Heart left ventricle (tissue), 16 donors: ENCODE measurements at regions of chr7 and their contacts with region 1.

Region 1: DNA sequence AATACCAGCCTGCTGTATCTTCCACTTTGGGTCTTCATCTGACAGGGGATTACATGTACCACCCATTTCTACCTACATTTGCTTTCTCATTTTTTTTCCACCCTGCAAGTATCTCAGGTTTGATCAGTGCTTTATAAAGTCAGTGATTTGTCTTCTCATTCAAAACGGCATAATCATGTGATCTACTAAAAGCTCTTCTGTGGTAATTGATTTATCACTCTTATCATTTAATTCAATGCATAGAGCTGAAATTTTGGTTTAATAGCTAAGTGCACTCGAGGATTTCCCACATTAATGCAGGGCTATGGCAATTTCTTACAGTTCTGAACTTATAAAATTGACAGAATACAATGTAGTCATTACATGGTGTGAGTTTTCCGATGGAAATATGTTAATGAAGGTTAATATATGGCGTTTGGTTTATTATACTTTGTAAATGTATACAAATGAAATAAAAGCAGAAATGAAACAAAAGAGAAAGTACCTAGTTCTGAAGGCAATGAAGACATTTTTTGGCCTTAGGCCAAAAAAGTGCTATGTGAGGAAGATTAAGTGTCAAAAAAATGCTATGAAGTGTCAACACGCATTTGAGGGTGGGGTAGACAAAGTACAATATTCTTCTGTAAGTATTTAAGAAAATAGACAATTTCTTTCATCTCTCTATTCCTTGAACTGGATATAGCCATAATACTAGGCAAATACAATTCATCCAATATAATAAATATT is 457.3 kb downstream of the ETV1 start:
- DNase-seq: no peak
- ATAC-seq: no peak
- H3K4me3 ChIP-seq: no peak overlapping the region
- H3K27ac ChIP-seq: no peak overlapping the region
- H3K4me1 ChIP-seq: no peaks in the 10 kb centered on the region
- H3K27me3 ChIP-seq: no peaks in the 10 kb centered on the region
- CTCF ChIP-seq: no peak
- POLR2A ChIP-seq: no peak

Region 2: GRCh38 chr7:13615679-13616078 is 83.5 kb after region 1 on chr7:
- intact Hi-C with region 1: no loop called
- DNase-seq: no peak
- ATAC-seq: no peak
- H3K4me3 ChIP-seq: no peak overlapping the region
- H3K27ac ChIP-seq: no peak overlapping the region
- H3K4me1 ChIP-seq: no peaks in the 10 kb centered on the region
- H3K27me3 ChIP-seq: no peaks in the 10 kb centered on the region
- CTCF ChIP-seq: no peak
- POLR2A ChIP-seq: no peak

Region 3: DNA sequence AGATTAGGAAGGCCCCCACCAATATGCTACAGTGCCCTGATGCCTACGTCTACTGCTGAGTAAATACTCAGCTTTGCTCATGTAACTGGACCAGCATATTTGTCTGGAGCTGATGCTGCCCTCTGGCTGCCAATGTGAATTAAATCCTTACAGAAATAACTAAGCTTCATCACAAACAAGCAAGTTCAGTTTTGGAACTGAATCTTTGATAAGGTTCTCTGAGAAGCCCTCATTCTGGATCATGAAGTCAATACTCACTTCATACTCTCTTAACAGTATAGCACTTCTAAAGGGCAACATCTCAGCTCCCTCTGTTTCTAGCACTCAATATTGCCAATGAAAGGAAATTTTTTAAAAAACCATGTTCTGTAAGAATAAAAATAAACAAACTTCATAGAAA is 210.6 kb after region 1 on chr7:
- intact Hi-C with region 1: loop called in 5 of 10 experiments (anchors 5 to 10 kb)
- DNase-seq: peak in 3 of 5 donors; percentile 16 to 48 (median 29)
- ATAC-seq: peak in 3 of 4 donors; percentile 75 to 79 (median 78)
- H3K4me3 ChIP-seq: no peak overlapping the region
- H3K27ac ChIP-seq: peak overlapping the region in 1 of 12 donors; percentile 12
- H3K4me1 ChIP-seq: peaks cover 0 to 13% (median 7%) of the 10 kb centered on the region in 12 donors
- H3K27me3 ChIP-seq: no peaks in the 10 kb centered on the region
- CTCF ChIP-seq: peak; percentile 24 to 66 (median 52)
- POLR2A ChIP-seq: no peak

Region 4: DNA sequence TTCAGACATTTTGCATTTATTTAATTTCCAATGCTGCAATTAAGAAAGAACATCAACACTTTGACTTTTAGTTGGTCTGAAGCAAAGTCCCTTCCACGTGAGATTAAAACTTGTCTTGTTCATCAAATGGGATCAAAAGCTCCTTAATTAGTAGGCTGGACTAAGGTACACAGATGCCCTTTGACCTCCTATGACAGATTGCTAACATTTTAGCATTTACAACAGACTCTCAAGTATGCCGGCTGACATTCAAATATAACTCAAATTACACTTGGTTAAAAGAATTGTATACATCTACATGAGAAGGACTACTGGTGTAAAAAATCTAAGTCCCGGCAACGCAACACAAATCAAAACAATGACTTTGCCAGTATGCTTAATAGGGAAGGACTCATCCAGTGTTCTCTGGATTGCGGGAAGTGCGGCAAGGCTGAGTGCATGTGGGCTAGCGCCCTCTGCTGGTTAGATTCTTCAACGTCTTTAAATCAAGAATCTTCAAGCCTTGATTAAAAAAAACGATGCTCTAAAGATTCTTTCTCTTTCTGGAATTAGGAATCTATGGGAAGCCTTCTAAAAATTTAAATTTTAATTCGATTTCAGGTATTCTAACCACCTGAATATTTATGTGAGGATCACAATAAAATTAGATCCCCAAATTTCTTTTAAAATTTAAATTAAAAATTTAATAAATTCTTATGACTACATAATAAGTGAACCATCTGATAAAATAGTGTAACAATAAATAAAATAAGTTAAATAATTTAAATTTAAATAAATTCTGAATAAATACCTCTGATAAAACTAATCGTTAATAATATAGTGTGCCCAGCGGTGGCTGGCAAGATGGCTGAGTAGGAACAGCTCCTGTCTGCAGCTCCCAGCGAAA is 925.6 kb after region 1 on chr7:
- intact Hi-C with region 1: loop called in 4 of 10 experiments (anchors 5 to 10 kb)
- DNase-seq: peak; percentile 66 to 72 (median 68)
- ATAC-seq: peak; percentile 73 to 85 (median 84)
- H3K4me3 ChIP-seq: peak overlapping the region in 3 of 12 donors; percentile 1 to 31 (median 22)
- H3K27ac ChIP-seq: peak overlapping the region in 2 of 12 donors; percentile 34 to 54
- H3K4me1 ChIP-seq: peaks cover 0 to 5% (median 0%) of the 10 kb centered on the region in 12 donors
- H3K27me3 ChIP-seq: no peaks in the 10 kb centered on the region
- CTCF ChIP-seq: peak; percentile 81 to 93 (median 88)
- POLR2A ChIP-seq: no peak

Region 5: GRCh38 chr7:14691597-14692203 is 1159.5 kb after region 1 on chr7:
- intact Hi-C with region 1: loop called in 5 of 10 experiments (anchors 10 kb)
- DNase-seq: peak; percentile 10 to 58 (median 33)
- ATAC-seq: no peak
- H3K4me3 ChIP-seq: no peak overlapping the region
- H3K27ac ChIP-seq: no peak overlapping the region
- H3K4me1 ChIP-seq: peaks cover 0 to 23% (median 0%) of the 10 kb centered on the region in 12 donors
- H3K27me3 ChIP-seq: peaks cover 0 to 3% (median 0%) of the 10 kb centered on the region in 9 donors
- CTCF ChIP-seq: peak; percentile 74 to 92 (median 86)
- POLR2A ChIP-seq: no peak